Head of caudate nucleus (tissue), 42 donors: ENCODE measurements at regions of chr17 and their contacts with region 1.

Region 1: DNA sequence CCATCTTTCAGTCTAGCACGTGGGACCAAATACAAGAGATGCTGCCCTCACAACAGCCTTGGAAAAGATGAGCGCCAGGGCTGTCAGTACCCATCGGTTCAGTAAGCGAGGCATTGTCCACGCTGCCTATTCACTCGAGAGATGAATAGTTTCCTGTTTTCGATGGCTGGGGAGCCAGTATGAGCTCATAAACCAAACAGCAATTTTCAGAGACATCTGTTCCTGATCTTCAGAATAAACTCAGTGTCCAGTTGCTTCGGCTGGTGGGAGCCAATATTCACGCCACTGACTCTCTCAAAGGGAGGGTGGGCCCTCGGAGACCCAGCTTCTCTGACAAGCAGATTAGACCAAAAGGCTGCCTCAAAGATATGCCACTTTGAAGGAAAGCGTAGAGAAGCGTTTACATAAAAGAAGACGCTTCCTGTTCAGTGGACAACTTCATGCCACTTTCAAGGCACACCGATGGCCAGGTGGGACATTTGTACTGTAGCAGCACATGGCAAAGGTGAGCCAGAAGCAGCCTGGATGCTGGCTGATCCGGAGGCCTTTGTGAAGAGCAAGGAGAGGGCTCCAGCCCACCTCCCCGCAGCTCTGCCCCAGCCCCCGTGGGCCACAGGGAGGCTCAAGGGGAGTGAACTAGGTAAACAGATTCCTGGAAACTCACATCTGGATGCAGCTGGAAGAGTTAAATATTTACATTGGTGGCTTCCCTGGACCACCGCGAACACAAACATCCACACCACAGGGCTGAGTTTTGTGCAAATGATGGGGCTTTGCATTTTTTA is 6.0 kb downstream of the TIMM22 start:
- DNase-seq: peak in 32 of 42 donors; percentile 43 to 84 (median 64)

Region 2: DNA sequence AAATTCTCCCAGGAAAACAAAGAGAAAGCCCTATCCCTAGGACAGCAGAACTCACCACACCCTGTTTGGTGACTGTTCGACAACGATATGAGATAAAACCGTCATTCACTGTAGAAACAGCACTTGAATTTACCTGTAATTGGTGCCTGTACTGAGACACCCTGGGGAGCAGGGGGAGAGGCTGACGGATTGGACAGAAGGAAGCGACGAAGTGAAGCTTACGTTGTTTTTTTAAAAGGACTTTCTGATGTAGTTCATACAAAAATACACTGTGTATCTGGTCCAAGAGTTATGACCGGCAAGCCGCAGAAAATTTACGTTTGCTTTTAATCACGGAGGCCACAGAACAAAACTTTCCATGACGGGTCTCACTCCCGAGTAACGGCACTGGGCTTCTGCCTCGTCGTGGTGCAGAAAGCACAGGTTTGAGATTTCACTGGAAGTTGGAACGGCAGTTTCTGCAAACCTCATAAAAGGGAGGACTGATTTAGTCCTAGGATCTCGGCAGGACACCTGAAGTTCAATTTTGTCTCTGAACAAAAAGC is 33.1 kb before region 1 on chr17:
- intact Hi-C with region 1: no loop called
- DNase-seq: no peak

Region 3: GRCh38 chr17:1039511-1040215 is 36.7 kb after region 1 on chr17:
- intact Hi-C with region 1: loop called (anchors 5 kb)
- DNase-seq: peak; percentile 54 to 90 (median 78)

Region 4: DNA sequence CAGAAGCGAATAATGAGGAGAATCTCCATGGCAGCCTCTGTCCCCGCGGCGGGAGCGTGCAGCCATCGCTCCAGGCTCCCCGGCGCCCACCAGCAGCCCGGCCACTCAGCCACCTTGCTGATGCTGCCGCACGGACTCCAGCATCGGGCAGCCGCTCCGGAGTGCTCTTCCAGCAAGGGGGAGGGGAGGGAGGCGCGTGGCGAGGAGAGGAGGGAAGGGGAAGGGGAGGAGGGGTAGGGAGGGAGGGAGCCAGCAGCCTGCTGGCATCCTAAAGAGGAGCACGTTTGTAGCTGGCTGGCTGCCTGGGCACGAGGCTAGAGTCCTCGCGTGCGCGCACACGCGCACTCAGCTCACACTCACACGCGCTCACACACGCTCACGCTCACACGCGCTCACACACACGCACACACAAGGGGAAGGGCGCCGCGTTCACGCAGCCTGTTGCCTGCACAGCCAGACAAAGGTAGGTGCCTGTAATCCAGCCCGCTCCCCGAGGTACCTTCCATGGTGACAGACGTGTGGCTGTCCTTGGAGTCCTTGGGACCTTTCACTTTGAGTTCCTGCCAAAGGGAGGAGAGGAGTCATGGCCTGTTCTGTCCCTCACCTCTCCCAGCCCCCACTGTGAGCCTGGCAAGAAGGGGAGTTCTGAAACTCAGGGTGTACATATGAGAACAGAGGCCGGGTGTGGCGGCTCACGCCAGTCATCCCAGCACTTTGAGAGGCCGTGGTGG is 76.0 kb after region 1 on chr17:
- intact Hi-C with region 1: no loop called
- DNase-seq: peak in 1 of 42 donors; percentile 10